GM13977 (cell line): ENCODE measurements at regions of chr5 and their contacts with region 1.

Region 1: DNA sequence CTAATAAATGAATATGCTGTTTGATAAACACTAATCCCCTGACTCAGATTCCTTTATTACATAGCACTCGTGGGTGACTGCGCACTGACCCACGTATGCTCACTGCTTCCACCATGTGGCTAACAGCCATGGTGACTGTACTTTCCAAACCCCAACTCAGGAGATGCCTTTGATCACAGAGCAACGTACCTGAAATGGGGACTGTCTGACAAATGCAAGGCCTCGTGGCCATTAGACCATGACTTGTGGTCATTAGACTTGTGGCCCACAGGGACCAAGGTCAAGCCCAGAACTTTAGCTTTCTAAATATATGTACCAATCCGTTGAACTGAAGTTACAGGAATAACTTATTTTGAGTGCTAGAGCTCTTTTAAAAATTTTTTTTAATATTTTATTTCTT is 46.6 kb downstream of the CYFIP2 start:
- DNase-seq: peak; percentile 87
- CTCF ChIP-seq: peak; percentile 82

Region 2: DNA sequence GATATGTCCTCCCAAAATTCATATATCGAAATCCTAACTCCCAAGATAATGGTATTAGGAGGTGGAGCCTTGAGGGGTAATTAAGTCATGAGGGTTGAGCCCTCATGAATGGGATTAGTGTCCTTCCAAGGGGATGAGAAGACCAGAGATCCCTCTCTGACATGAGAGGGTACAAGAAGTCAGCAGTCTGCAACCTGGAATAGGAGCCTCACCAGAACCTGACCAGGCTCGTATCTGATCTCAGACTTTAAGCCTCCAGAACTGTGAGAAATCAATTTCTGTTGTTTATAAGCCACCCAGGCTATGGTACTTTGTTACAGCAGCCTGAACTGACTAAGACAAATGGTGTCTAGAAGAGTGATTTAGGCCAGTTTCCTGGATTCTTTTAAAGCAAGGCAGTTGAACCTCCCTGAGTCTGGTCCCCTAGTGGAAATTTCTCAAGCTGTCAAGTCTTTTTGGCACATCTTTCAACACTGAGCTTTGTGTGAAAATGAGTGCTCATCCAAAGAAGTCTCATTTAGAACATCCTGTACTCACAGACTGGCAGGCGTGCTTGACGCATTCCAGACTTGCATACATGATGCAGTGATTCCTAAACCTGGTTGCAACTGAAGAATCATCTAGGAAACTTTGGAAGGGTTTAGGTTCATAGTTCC is 717.2 kb before region 1 on chr5:
- in situ Hi-C with region 1: no loop called
- DNase-seq: no peak
- CTCF ChIP-seq: no peak

Region 3: DNA sequence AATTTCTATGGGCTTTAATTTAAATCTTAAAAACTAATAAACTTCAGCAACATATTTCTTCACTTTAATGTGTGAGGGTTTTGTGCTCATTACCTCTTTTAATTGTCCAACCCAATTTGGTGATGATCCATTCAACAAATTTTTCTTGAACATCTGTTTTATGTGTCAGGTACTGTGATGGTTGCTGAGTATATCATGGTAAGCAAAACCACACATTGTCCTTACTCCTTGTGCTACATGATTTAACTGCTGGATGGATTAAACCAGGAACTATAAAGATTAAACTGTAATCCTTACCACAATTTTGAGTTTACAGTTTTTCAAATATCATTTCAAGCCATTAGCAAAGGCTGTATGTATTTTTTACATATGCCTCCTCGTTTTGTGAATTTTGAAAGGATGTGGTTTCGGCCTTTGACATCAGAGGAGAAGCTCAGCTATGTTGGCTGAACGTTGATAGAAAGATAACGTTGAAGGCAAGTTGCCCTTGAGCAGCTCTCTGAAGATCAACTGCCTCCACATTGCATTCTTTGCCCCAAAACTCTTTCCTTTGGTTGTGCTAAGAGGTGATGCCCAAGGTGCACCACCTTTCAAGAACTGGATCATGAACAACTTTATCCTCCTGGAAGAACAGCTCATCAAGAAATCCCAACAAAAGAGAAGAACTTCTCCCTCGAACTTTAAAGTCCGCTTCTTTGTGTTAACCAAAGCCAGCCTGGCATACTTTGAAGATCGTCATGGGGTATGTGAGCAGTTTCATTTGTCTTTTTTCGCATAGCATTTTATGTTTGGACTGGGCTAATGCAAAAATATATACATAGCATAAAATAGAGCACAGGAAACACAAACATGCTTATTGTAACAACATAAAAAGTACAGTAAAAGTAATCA is 131.9 kb before region 1 on chr5 and contains the start of gene ITK:
- in situ Hi-C with region 1: no loop called
- DNase-seq: no peak
- CTCF ChIP-seq: no peak

Region 4: GRCh38 chr5:157259699-157260098 is 52.8 kb before region 1 on chr5:
- in situ Hi-C with region 1: loop called (anchors 5 kb)
- DNase-seq: no peak
- CTCF ChIP-seq: no peak

Region 5: DNA sequence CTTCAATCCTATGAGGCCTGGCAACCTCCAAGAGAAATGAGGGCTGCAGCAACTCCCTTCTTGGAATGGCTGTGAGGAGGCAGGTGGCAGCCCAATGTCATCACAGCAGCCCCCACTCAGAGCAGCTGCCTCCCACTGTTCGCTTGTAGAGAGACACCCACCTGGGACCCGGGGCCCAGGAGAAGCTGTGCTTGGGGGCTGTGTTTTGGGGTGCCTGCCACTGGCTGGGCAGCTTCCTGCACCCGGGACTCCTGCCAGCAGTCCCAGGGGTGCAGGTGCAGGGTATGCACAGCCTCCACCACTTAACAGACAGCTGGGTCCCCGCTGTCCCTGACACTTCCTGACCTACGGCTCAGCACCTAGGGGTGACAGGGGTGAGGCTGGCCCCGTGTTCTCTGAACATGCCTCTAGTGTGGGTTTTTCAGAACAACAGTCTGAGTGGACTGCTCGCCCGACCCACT is 173.8 kb after region 1 on chr5:
- in situ Hi-C with region 1: no loop called
- DNase-seq: peak; percentile 34
- CTCF ChIP-seq: no peak